ENCODE measurements at regions of chr2 and their contacts with region 1.

Region 1: DNA sequence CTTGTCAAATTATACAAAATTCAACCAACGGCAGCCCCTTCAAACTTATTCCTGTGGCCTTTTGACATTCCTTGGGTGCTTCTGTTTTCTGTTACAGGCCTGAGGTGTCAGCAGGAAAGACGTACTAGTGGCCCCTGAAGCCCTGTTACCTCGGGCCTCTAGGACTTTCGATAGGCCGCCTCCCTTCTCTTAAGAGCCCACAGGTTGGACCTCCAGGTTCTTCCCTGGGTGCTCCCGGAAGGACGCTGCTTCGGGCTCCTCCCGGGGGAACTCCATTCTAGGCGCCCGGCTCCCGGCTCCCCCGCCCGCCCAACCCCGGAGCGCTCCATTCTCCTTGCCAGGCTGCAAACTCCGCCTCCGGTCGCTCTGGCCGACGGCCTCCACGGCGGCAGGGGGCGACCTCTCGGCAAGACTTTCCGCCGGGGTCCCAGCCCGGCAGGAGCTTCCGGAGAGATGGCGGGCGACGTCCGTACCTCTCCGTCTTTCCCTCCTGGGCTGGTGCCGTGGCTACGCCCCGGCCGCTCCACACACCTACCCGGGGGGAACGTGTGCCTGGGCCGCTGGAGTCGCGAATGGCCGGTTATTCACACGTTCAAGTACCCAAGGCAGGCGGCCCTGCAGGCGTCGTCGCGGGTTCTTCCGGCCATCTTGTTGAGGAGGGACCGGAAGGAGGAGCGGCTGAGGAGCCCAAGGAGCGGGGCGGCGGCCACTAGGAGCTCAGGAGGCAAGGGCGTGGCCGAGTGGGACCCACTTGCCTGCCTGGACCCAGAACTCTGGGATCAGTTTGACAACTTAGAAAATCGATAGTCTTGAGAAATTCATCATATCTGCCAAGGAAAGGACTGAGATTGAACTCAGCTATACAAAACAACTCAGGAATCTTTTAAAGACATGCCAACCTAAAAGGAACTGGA is 27.5 kb downstream of the BOLA3 start:
- DNase-seq: peak; percentile 78
- ATAC-seq: peak; percentile 99
- H3K4me3 ChIP-seq: peak overlapping the region; percentile 79 to 91 (median 91)
- H3K27ac ChIP-seq: peak overlapping the region; percentile 83
- H3K4me1 ChIP-seq: peaks cover 14% of the 10 kb centered on the region
- H3K27me3 ChIP-seq: no peaks in the 10 kb centered on the region
- CTCF ChIP-seq: peak; percentile 93
- EP300 ChIP-seq: 0 out of 4 replicates have a peak, but pooled peaks of 1 of the 2 experiments have one; percentile 18
- POLR2A ChIP-seq: peak; percentile 16 to 63; a peak in 3 of 4 replicates
- RAD21 ChIP-seq: peak; percentile 84

Region 2: GRCh38 chr2:73926493-73927338 is 193.5 kb before region 1 on chr2 and contains the start of gene DGUOK:
- CTCF ChIA-PET with region 1: no interaction called
- POLR2A ChIA-PET with region 1: interaction called, 13 read pairs
- in situ Hi-C with region 1: no loop called
- intact Hi-C with region 1: loop called (anchors 10 kb)
- DNase-seq: peak; percentile 99
- ATAC-seq: peak; percentile 99
- H3K4me3 ChIP-seq: peak within 1 kb of the TSS; percentile 76 to 91 (median 82)
- H3K27ac ChIP-seq: peak within 1 kb of the TSS; percentile 78
- H3K4me1 ChIP-seq: peaks cover 44% of the 10 kb centered on the region
- H3K27me3 ChIP-seq: peaks cover 0 to 5% of the 10 kb centered on the region in 2 experiments; a peak in 2 of 5 replicates
- CTCF ChIP-seq: no peak
- EP300 ChIP-seq: peak; percentile 49 to 64; a peak in 2 of 4 replicates
- POLR2A ChIP-seq: peak; percentile 95 to 97
- RAD21 ChIP-seq: peak; percentile 69
- total RNA-seq, gene DGUOK: 105 and 130 TPM in 2 replicates

Region 3: GRCh38 chr2:74147727-74148456 is 27.7 kb after region 1 on chr2 and contains the start of gene BOLA3:
- CTCF ChIA-PET with region 1: interaction called, 10 read pairs
- POLR2A ChIA-PET with region 1: interaction called, 21 read pairs
- in situ Hi-C with region 1: no loop called
- intact Hi-C with region 1: loop called (anchors 2 kb)
- DNase-seq: peak; percentile 78
- ATAC-seq: peak; percentile 94
- H3K4me3 ChIP-seq: peak within 1 kb of the TSS; percentile 84 to 95 (median 94)
- H3K27ac ChIP-seq: peak within 1 kb of the TSS; percentile 72
- H3K4me1 ChIP-seq: peaks cover 33% of the 10 kb centered on the region
- H3K27me3 ChIP-seq: no peaks in the 10 kb centered on the region; a peak in 1 of 5 replicates
- CTCF ChIP-seq: peak; percentile 84
- EP300 ChIP-seq: peak in 1 of 2 experiments; percentile 17; a peak in 2 of 4 replicates
- POLR2A ChIP-seq: peak; percentile 92 to 96
- RAD21 ChIP-seq: peak; percentile 82
- total RNA-seq, gene BOLA3: 170 and 172 TPM in 2 replicates

Region 4: GRCh38 chr2:74178201-74179062 is 58.3 kb after region 1 on chr2 and contains the start of gene MOB1A:
- CTCF ChIA-PET with region 1: no interaction called
- POLR2A ChIA-PET with region 1: interaction called, 29 read pairs
- in situ Hi-C with region 1: no loop called
- intact Hi-C with region 1: no loop called
- DNase-seq: peak; percentile 98
- ATAC-seq: peak; percentile 98
- H3K4me3 ChIP-seq: peak within 1 kb of the TSS; percentile 66 to 91 (median 82)
- H3K27ac ChIP-seq: peak within 1 kb of the TSS; percentile 96
- H3K4me1 ChIP-seq: peaks cover 43% of the 10 kb centered on the region
- H3K27me3 ChIP-seq: no peaks in the 10 kb centered on the region; a peak in 1 of 5 replicates
- CTCF ChIP-seq: no peak; the same call in 1 of the 2 replicates
- EP300 ChIP-seq: no peak
- POLR2A ChIP-seq: peak; percentile 88 to 92; a peak in 3 of 4 replicates
- RAD21 ChIP-seq: peak; percentile 56
- total RNA-seq, gene MOB1A: 139 and 217 TPM in 2 replicates

Region 5: GRCh38 chr2:75680402-75680801 is 1560.2 kb after region 1 on chr2:
- CTCF ChIA-PET with region 1: no interaction called
- POLR2A ChIA-PET with region 1: no interaction called
- in situ Hi-C with region 1: no loop called
- intact Hi-C with region 1: no loop called
- DNase-seq: no peak
- ATAC-seq: no peak
- H3K4me3 ChIP-seq: no peak overlapping the region
- H3K27ac ChIP-seq: no peak overlapping the region
- H3K4me1 ChIP-seq: no peaks in the 10 kb centered on the region
- H3K27me3 ChIP-seq: no peaks in the 10 kb centered on the region
- CTCF ChIP-seq: no peak
- EP300 ChIP-seq: no peak
- POLR2A ChIP-seq: no peak
- RAD21 ChIP-seq: no peak